PC-9 (cell line): ENCODE measurements at regions of chr1 and their contacts with region 1.

Region 1: DNA sequence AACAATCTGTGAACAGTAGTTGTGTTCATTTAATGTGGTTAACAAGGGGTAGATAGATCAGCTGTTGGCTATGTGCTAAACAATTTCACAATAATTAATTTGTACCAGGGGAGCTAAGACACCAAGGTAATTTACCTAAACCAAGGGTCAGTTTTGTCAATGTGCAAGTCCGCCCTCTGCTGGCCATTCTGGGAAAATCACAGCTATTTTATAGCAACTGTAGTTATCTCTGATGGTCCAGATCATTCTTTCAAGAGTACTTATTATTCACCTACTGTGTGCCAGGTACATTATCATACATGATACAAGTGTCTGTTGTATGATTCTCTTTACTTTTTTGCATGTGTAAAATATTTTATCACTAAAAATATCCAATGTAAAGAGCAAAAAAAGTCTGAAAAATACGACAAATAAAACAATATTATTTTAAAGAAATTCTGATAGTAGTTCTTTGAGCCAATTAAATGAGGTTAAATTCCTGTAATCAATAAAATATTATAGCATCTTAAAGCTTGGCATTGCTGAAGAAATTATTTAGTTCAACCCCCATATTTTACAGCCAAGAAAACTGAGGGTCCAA is 312.3 kb upstream of the FAM78B start:
- DNase-seq: peak in 1 of 2 experiments; percentile 31
- H3K4me3 ChIP-seq: no peak overlapping the region
- H3K27ac ChIP-seq: no peak overlapping the region
- H3K4me1 ChIP-seq: no peaks in the 10 kb centered on the region
- H3K27me3 ChIP-seq: no peaks in the 10 kb centered on the region
- CTCF ChIP-seq: peak; percentile 84

Region 2: DNA sequence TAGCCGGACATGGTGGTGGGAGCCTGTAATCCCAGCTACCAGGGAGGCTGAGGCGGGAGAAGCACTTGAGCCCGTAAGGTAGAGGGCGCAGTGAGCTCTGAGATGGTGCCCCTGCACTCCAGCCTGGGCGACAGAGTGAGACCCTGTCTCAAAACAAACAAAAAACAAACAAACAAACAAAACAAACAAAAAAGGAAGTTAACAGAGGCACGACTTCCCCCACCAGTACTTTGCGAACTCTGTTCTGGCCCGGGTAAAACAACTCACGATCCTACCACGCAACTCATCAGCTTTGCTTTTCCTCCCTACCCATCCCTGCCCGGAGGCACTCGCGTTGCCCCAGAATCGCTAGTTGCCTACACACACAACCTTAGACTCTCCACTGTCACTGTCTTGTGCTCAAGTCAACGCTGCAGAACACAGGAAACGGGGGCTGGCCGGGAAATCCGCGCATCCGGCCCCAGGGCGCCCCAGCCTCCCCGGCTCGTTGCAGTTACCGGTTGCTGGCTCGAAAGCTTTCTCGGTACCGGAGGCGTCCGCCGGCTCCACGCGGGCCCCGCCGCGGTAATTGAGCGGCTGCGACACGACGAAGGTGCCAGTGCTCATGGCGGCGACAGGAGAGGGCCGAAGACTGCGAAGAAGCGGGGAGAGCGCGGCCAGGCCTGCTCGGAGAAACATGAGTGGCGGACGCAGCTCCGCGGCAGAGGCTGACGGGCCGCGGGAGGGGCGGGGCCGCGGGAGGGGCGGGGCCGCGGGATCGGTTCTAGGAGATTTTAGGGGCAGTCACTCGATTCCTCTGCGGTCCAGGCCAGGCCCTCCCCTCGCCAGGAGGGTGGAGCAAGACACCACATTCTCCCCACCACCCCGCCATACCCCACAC is 781.0 kb before region 1 on chr1 and contains the start of gene ALDH9A1:
- CTCF ChIA-PET with region 1: no interaction called
- POLR2A ChIA-PET with region 1: no interaction called
- intact Hi-C with region 1: loop called (anchors 5 kb)
- DNase-seq: peak; percentile 79 to 89
- H3K4me3 ChIP-seq: peak within 1 kb of the TSS; percentile 65
- H3K27ac ChIP-seq: peak within 1 kb of the TSS; percentile 62
- H3K4me1 ChIP-seq: peaks cover 20% of the 10 kb centered on the region
- H3K27me3 ChIP-seq: no peaks in the 10 kb centered on the region
- CTCF ChIP-seq: peak; percentile 36; the same call in 1 of the 2 replicates
- total RNA-seq, gene ALDH9A1: 31.8 and 42.5 TPM in 2 replicates

Region 3: DNA sequence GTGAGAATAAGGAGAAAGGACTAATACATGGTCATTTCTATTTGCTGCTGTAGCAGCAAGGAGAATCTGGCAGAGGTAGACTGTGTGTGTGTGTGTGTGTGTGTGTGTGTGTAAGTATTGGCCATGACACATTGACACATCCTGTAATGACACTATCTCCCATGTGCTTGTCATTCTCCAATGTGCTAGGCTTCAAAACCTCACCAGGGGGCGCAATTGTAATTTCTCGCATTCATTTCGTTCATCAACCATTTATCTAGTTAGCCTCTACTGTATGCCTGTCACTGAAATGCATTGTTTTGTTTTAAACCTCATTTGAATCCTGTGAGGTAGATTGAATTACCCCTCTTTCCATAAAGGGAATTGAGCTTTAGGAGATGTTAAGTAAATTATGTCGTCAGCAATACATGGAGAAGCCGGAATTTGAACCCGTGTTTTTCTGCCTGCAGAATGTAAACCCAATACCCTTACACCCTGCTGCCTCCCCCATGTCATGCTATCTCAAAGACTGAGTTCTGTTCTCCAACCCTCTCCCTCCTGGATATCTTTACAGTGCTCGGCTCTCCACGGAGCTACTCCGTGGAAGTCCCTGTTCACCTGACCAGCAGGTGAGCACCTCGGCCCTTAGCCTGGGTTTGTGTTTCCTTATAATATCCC is 550.9 kb before region 1 on chr1:
- CTCF ChIA-PET with region 1: interaction called, 4 read pairs
- POLR2A ChIA-PET with region 1: no interaction called
- intact Hi-C with region 1: loop called (anchors 1 kb)
- DNase-seq: peak in 1 of 2 experiments; percentile 17
- H3K4me3 ChIP-seq: no peak overlapping the region
- H3K27ac ChIP-seq: no peak overlapping the region
- H3K4me1 ChIP-seq: no peaks in the 10 kb centered on the region
- H3K27me3 ChIP-seq: no peaks in the 10 kb centered on the region
- CTCF ChIP-seq: peak; percentile 81

Region 4: DNA sequence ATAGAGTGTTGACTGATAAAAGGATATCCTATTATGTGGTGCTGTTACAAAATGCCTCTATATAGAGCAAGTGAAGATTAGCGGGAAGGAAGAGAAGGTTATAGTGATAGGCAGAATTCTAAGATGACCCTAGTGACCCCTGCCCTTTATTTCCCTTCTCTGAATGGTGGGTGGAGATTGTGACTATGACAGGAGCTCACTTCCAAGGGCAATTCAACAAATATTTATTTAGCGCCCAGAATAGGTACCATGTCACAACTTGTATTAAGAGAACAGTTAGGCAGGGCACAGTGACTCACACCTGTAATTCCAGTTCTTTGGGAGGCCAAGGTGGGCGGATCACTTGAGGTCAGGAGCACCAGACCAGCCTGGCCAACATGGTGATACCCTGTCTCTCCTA is 124.1 kb after region 1 on chr1:
- CTCF ChIA-PET with region 1: no interaction called
- POLR2A ChIA-PET with region 1: no interaction called
- intact Hi-C with region 1: no loop called
- DNase-seq: peak; percentile 58 to 96
- H3K4me3 ChIP-seq: no peak overlapping the region
- H3K27ac ChIP-seq: peak overlapping the region; percentile 22
- H3K4me1 ChIP-seq: peaks cover 36% of the 10 kb centered on the region
- H3K27me3 ChIP-seq: no peaks in the 10 kb centered on the region
- CTCF ChIP-seq: no peak